ENCODE measurements at regions of chr19 and their contacts with region 1.

Region 1: DNA sequence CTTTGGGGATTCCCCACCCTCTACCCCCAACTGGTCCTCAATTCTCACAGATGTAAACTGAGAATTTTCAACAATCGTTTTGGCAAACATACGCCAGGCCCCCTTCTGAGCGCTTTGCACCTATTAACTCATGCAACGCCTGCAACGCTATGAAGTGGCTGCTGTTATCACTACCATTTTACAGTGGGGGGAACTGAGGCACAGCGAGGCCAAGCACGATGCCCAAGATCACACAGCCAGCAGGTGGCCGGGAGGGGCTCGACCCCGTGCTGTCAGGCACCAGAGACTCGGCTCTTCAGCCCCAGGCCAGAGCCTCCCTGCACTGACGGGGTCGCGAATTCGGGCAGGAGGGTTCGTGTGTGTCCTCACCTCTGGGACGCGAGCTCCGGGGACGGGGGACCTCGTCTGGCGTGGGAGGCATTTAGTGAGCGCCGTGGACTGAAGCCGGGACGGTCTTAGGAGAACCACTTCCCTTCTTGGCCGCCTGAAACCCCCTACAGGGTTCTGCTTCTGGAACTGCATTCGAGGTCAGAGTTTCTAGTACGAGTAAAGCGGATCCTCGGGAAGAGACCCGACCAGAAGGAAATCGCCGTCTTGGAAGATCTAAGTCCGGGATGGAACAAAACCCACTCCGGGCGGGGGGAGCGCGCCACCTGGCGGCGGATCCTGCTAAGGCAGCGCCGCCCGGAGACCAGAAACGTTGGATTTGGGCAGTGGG is 21.0 kb downstream of the ZNF114 start:
- DNase-seq: peak; percentile 22 to 79 (median 56)
- ATAC-seq: peak; percentile 79
- H3K4me3 ChIP-seq: peak overlapping the region; percentile 72
- H3K4me3 Mint-ChIP-seq: peak overlapping the region; percentile 71 to 86 (median 81)
- H3K27ac ChIP-seq: no peak overlapping the region
- H3K27ac Mint-ChIP-seq: peak overlapping the region in 2 of 9 donors; percentile 9 to 46
- H3K4me1 ChIP-seq: peaks cover 6 to 7% of the 10 kb centered on the region in 2 donors
- H3K4me1 Mint-ChIP-seq: peaks cover 0 to 8% (median 3%) of the 10 kb centered on the region in 7 donors
- H3K27me3 ChIP-seq: peaks cover 0 to 3% of the 10 kb centered on the region in 2 donors
- H3K27me3 Mint-ChIP-seq: peaks cover 0 to 9% (median 4%) of the 10 kb centered on the region in 5 donors

Region 2: DNA sequence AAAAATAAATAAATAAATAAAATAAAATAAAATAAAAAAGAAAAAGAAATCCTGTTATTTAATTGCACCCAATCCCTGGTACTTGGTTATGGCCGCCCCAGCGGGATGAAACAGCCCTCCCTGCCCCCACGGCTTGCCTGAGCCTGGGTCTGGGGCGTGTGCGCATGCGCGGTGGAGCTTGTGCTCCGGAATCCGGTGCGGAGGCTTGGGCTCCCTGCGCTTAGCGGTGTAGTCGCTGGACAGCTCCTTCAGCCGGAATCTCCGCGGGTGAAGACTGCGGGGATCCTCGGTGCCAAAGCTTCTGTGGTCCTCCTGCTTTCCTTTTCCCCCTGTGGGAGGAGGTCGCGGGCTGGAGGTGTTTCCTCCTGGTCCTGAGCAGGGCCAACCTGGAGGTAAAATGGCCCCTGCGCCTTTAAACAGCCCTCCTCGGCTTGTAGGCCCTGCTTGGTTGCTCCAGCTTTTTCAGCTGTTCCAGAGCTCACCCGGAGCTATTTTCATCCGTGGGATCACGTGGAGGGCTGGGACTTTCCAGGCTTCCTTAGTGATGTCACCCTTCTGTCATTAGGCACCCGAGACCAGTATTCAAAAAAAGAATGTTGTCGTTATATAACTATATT is 180.5 kb before region 1 on chr19 and contains the start of gene PLA2G4C:
- CTCF ChIA-PET with region 1: no interaction called
- POLR2A ChIA-PET with region 1: no interaction called
- intact Hi-C with region 1: loop called in 1 of 2 experiments (anchors 1 kb)
- DNase-seq: peak; percentile 69 to 88 (median 79)
- ATAC-seq: peak; percentile 83
- H3K4me3 ChIP-seq: peak within 1 kb of the TSS; percentile 62
- H3K4me3 Mint-ChIP-seq: peak within 1 kb of the TSS; percentile 66 to 86 (median 79)
- H3K27ac ChIP-seq: peak within 1 kb of the TSS; percentile 30
- H3K27ac Mint-ChIP-seq: peak within 1 kb of the TSS; percentile 37 to 92 (median 71)
- H3K4me1 ChIP-seq: no peaks in the 10 kb centered on the region
- H3K4me1 Mint-ChIP-seq: peaks cover 5 to 19% (median 9%) of the 10 kb centered on the region in 7 donors
- H3K27me3 ChIP-seq: no peaks in the 10 kb centered on the region
- H3K27me3 Mint-ChIP-seq: no peaks in the 10 kb centered on the region
- total RNA-seq, gene PLA2G4C: 3.3 to 21.2 (median 9.1) TPM

Region 3: DNA sequence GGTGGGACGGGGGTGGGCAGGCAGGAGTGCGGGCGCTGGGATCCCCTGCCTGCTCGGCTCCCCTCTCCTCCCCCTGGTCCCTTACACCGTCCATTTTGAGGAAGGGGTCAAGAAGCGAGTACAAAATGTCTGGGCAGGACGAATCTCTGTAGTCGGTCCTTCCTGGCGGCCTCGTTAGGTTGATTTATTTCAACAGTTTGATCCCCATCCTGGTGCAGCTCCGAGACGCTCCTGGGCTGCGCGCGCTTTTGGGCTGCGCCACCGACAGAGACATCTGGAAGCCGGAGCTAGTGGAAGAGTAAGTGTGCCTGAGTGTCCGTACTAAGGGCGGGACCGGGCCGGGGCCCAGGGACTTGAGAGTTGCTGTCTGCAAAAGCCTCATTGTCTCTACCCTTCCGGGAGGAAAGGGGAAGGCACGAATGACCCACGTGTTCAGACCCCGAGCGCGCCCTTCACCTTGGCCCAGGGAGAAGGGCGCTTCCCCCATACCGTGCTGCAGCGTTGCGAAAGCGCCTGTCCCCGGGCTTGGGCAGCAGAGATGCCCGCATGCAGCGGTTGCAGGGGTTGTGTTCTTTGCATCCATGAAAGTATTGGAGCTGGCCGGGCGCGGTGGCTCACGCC is 19.3 kb before region 1 on chr19:
- CTCF ChIA-PET with region 1: interaction called, 8 read pairs
- POLR2A ChIA-PET with region 1: interaction called, 5 read pairs
- intact Hi-C with region 1: loop called (anchors 1 kb)
- DNase-seq: peak in 4 of 9 donors; percentile 5 to 32 (median 9)
- ATAC-seq: peak; percentile 40
- H3K4me3 ChIP-seq: peak overlapping the region; percentile 55
- H3K4me3 Mint-ChIP-seq: peak overlapping the region; percentile 76 to 95 (median 88)
- H3K27ac ChIP-seq: no peak overlapping the region
- H3K27ac Mint-ChIP-seq: peak overlapping the region in 1 of 9 donors; percentile 33
- H3K4me1 ChIP-seq: peaks cover 0 to 5% of the 10 kb centered on the region in 2 donors
- H3K4me1 Mint-ChIP-seq: peaks cover 13 to 30% (median 20%) of the 10 kb centered on the region in 7 donors
- H3K27me3 ChIP-seq: no peaks in the 10 kb centered on the region
- H3K27me3 Mint-ChIP-seq: peaks cover 0 to 23% (median 11%) of the 10 kb centered on the region in 5 donors

Measured in naive thymus-derived CD4-positive, alpha-beta T cell (primary cell).